ENCODE measurements at regions of chr3 and their contacts with region 1.

Region 1: DNA sequence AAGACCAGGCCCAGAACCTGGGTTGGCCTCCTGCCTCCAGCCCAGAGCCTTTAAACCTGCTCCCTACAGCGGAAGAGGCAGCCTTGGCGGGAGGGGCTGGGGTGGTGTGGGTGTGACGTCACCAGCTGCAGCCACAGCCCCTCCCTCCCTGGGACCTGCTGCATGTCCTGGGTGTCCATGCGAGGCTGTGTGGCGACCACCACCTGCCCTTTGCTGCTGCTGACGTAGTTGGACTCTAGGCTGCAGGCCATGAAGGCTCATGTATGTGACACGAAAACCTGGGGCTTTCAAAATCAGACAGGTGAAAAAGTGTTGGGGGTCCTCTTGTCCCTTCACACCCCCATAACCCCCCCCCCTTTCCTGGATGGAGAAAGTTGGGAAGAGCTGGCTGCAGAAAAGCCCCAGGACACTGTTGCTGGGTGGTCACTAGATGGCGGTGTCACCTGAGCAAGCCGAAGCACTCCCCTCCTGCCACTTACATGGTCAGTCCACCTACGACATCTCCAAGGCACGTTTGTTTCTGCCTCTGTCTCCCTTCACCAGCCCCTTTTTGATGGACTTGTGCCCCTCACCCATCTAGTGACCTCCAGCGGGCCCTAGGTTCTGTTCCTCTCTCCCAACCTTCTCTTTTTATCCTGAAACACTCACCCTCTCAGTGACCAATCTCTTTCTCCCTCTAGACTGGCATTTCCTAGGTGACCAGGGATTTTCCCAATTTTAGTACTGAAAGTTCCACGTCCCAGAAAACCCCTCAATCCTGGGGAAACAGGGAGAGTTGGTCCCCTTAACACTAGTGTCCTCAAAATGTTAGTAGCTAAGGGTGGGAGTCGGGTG is 35.2 kb downstream of the SLC6A20 start:
- DNase-seq: peak; percentile 67
- H3K4me3 Mint-ChIP-seq: no peak overlapping the region
- H3K27ac Mint-ChIP-seq: no peak overlapping the region
- H3K4me1 Mint-ChIP-seq: no peaks in the 10 kb centered on the region
- H3K27me3 Mint-ChIP-seq: no peaks in the 10 kb centered on the region
- CTCF ChIP-seq: peak; percentile 72

Region 2: GRCh38 chr3:45832691-45833090 is 71.6 kb after region 1 on chr3:
- CTCF ChIA-PET with region 1: interaction called, 36 read pairs
- intact Hi-C with region 1: loop called (anchors 1 kb)
- DNase-seq: peak; percentile 50
- H3K4me3 Mint-ChIP-seq: no peak overlapping the region
- H3K27ac Mint-ChIP-seq: no peak overlapping the region
- H3K4me1 Mint-ChIP-seq: no peaks in the 10 kb centered on the region
- H3K27me3 Mint-ChIP-seq: no peaks in the 10 kb centered on the region
- CTCF ChIP-seq: peak; percentile 34

Region 3: DNA sequence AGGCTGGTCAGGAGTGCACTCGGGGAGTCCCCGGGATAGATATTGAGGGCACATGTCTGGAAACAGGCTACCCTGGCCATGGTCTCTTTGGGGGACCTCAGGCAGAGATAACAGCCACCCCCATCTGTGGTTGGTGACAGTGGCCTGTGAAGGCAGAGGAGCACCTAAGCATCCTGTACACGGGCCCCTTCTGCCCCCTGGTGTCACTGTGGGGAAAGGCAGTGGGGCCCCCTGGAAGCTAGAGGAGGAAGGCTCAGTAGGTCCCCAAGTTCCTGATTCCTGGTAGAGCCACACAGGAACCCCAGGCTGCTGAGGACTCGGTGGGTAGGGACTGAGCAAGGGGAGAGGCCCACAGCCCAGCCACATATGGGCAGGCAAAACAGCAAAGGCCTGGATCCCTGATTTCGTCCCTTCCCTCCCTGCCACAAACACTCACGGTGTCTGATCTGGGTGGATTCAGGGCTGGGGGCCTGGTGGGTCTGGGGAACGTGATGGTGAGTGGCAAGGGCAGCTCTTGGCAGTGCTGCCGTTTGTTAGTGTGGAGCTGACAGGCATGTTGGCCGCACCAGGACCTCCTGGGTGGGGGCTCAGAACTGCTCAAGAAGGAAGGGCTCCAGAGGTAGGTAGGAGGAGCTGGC is 168.1 kb after region 1 on chr3:
- CTCF ChIA-PET with region 1: interaction called, 10 read pairs
- intact Hi-C with region 1: loop called (anchors 1 kb)
- DNase-seq: peak; percentile 58
- H3K4me3 Mint-ChIP-seq: no peak overlapping the region
- H3K27ac Mint-ChIP-seq: no peak overlapping the region
- H3K4me1 Mint-ChIP-seq: no peaks in the 10 kb centered on the region
- H3K27me3 Mint-ChIP-seq: no peaks in the 10 kb centered on the region
- CTCF ChIP-seq: peak; percentile 50

Measured in Calu3 (cell line).